ENCODE measurements at regions of chr5 and their contacts with region 1.

Region 1: GRCh38 chr5:108381954-108382783 is at the start of gene FBXL17:
- DNase-seq: peak; percentile 78 to 95 (median 91)
- ATAC-seq: peak; percentile 77 to 83 (median 78)
- H3K4me3 ChIP-seq: peak within 1 kb of the TSS; percentile 92 to 95
- H3K4me3 Mint-ChIP-seq: peak within 1 kb of the TSS; percentile 88 to 91 (median 89)
- H3K27ac ChIP-seq: peak within 1 kb of the TSS; percentile 97
- H3K27ac Mint-ChIP-seq: peak within 1 kb of the TSS; percentile 97 to 99
- H3K4me1 ChIP-seq: peaks cover 13 to 20% of the 10 kb centered on the region in 2 experiments
- H3K4me1 Mint-ChIP-seq: peaks cover 39 to 44% (median 44%) of the 10 kb centered on the region in 3 donors
- H3K27me3 ChIP-seq: no peaks in the 10 kb centered on the region
- H3K27me3 Mint-ChIP-seq: no peaks in the 10 kb centered on the region
- total RNA-seq, gene FBXL17: 20.4 to 30.1 (median 22.1) TPM

Region 2: GRCh38 chr5:108196281-108196680 is 185.9 kb before region 1 on chr5:
- CTCF ChIA-PET with region 1: interaction called in 1 of 2 experiments, 10 read pairs
- POLR2A ChIA-PET with region 1: no interaction called
- DNase-seq: no peak
- ATAC-seq: no peak
- H3K4me3 ChIP-seq: no peak overlapping the region
- H3K4me3 Mint-ChIP-seq: no peak overlapping the region
- H3K27ac ChIP-seq: no peak overlapping the region
- H3K27ac Mint-ChIP-seq: no peak overlapping the region
- H3K4me1 ChIP-seq: no peaks in the 10 kb centered on the region
- H3K4me1 Mint-ChIP-seq: no peaks in the 10 kb centered on the region
- H3K27me3 ChIP-seq: no peaks in the 10 kb centered on the region
- H3K27me3 Mint-ChIP-seq: no peaks in the 10 kb centered on the region

Region 3: DNA sequence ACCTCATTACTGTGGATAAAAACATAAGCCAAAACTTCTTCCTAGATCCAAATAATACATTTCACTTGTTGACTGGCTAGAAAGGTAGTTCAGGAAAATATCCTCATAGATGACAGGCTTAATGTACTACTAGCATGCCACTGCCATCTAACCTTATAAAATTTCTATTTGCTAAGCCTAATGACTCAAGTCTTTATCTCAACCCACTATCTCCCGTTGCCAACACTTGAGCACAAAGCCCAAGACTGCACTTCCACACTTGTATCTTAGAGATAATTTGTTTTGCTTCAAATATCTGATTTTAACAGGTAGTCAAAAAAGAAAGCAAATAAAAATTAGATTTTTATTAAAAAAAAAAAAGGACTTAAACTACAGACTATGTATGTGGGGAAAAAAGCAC is 42.9 kb before region 1 on chr5:
- CTCF ChIA-PET with region 1: no interaction called
- POLR2A ChIA-PET with region 1: no interaction called
- DNase-seq: no peak
- ATAC-seq: no peak
- H3K4me3 ChIP-seq: no peak overlapping the region
- H3K4me3 Mint-ChIP-seq: no peak overlapping the region
- H3K27ac ChIP-seq: no peak overlapping the region
- H3K27ac Mint-ChIP-seq: no peak overlapping the region
- H3K4me1 ChIP-seq: no peaks in the 10 kb centered on the region
- H3K4me1 Mint-ChIP-seq: peaks cover 4% of the 10 kb centered on the region in 3 donors
- H3K27me3 ChIP-seq: no peaks in the 10 kb centered on the region
- H3K27me3 Mint-ChIP-seq: no peaks in the 10 kb centered on the region

Region 4: GRCh38 chr5:108361239-108361638 is 20.9 kb before region 1 on chr5:
- CTCF ChIA-PET with region 1: no interaction called
- POLR2A ChIA-PET with region 1: no interaction called
- DNase-seq: no peak
- ATAC-seq: no peak
- H3K4me3 ChIP-seq: no peak overlapping the region
- H3K4me3 Mint-ChIP-seq: no peak overlapping the region
- H3K27ac ChIP-seq: no peak overlapping the region
- H3K27ac Mint-ChIP-seq: no peak overlapping the region
- H3K4me1 ChIP-seq: no peaks in the 10 kb centered on the region
- H3K4me1 Mint-ChIP-seq: peaks cover 0 to 4% (median 3%) of the 10 kb centered on the region in 3 donors
- H3K27me3 ChIP-seq: no peaks in the 10 kb centered on the region
- H3K27me3 Mint-ChIP-seq: no peaks in the 10 kb centered on the region

Region 5: GRCh38 chr5:108560581-108560980 is 178.4 kb after region 1 on chr5:
- CTCF ChIA-PET with region 1: no interaction called
- POLR2A ChIA-PET with region 1: no interaction called
- DNase-seq: no peak
- ATAC-seq: no peak
- H3K4me3 ChIP-seq: no peak overlapping the region
- H3K4me3 Mint-ChIP-seq: no peak overlapping the region
- H3K27ac ChIP-seq: no peak overlapping the region
- H3K27ac Mint-ChIP-seq: no peak overlapping the region
- H3K4me1 ChIP-seq: no peaks in the 10 kb centered on the region
- H3K4me1 Mint-ChIP-seq: no peaks in the 10 kb centered on the region
- H3K27me3 ChIP-seq: no peaks in the 10 kb centered on the region
- H3K27me3 Mint-ChIP-seq: peaks cover 0 to 5% of the 10 kb centered on the region in 2 donors

Region 6: GRCh38 chr5:108687595-108688200 is 305.5 kb after region 1 on chr5:
- CTCF ChIA-PET with region 1: no interaction called
- POLR2A ChIA-PET with region 1: no interaction called
- DNase-seq: peak in 1 of 35 experiments; percentile 3
- ATAC-seq: no peak
- H3K4me3 ChIP-seq: no peak overlapping the region
- H3K4me3 Mint-ChIP-seq: no peak overlapping the region
- H3K27ac ChIP-seq: no peak overlapping the region
- H3K27ac Mint-ChIP-seq: no peak overlapping the region
- H3K4me1 ChIP-seq: no peaks in the 10 kb centered on the region
- H3K4me1 Mint-ChIP-seq: peaks cover 0 to 2% (median 2%) of the 10 kb centered on the region in 3 donors
- H3K27me3 ChIP-seq: peaks cover 0 to 3% of the 10 kb centered on the region in 2 experiments
- H3K27me3 Mint-ChIP-seq: peaks cover 3% of the 10 kb centered on the region in 2 donors